ENCODE measurements at regions of chr19 and their contacts with region 1.

Region 1: DNA sequence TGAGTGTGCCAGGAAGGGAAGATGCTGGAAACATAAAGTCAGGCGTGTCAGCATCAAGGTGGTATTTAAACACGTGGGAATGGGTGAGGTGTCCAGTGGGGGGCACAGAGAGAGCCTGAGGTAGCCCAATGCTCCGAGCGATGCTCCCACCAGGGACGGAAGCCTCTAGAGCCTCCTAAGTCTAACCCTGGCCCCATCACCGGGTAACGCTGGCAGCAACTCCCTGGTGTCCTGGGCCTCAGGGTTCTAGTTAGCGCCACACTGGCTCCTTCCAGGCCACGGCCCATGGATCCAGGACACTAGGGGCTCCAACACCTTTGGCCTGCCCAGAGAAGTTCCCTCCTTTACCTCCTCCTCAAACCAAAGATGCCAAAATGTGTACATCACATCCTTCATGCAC is 65.4 kb downstream of the EPS15L1 start:
- DNase-seq: no peak
- H3K4me3 ChIP-seq: no peak overlapping the region
- H3K27ac ChIP-seq: no peak overlapping the region
- H3K4me1 ChIP-seq: no peaks in the 10 kb centered on the region
- H3K27me3 ChIP-seq: no peaks in the 10 kb centered on the region

Region 2: GRCh38 chr19:16417660-16418596 is 11.6 kb after region 1 on chr19:
- CTCF ChIA-PET with region 1: interaction called, 14 read pairs
- POLR2A ChIA-PET with region 1: no interaction called
- DNase-seq: peak; percentile 57 to 77 (median 76)
- H3K4me3 ChIP-seq: no peak overlapping the region
- H3K27ac ChIP-seq: no peak overlapping the region
- H3K4me1 ChIP-seq: peaks cover 0 to 4% (median 1%) of the 10 kb centered on the region in 4 experiments
- H3K27me3 ChIP-seq: no peaks in the 10 kb centered on the region

Measured in common myeloid progenitor, CD34-positive (primary cell).